ENCODE measurements at regions of chr2 and their contacts with region 1.

Region 1: GRCh38 chr2:100262555-100263320 is 59.6 kb downstream of the LONRF2 start:
- DNase-seq: peak; percentile 73
- ATAC-seq: peak; percentile 70
- H3K4me3 Mint-ChIP-seq: no peak overlapping the region
- H3K27ac Mint-ChIP-seq: no peak overlapping the region
- H3K4me1 Mint-ChIP-seq: no peaks in the 10 kb centered on the region
- H3K27me3 Mint-ChIP-seq: no peaks in the 10 kb centered on the region
- CTCF ChIP-seq: peak; percentile 97

Region 2: DNA sequence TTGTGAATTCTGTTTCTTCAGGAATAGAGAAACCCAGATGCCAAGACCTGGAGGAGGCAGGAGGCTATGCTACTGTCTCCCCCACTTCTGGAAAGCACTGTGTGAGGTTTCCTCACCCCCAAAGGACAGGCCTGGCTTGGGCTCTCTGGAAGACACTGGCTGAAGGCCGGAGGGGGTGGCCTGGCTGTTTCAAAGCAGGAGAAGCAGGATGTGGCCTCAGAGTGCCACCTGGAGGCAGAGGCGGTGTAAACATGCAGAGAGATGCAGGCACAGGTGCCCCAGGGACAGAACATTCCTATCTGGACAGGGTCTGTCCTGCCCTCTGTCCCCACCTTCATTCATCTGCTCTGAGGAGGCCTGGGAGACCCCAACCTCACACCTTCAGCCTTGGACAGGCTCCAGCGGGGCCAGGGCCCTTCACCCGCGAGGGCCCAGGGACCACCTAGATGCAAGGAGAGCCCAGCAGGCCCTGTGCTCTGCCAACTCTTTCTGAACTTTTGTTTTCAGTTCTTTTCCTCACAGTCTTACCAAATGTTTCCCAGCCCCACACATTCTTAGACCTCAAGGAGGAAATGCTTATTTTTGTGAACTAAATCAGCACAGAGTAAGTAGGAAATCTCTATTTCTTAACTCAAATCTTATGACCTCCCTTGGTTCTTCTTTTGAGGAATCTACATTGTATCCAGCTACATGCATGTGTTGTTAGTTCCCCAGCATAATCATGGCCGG is 19.7 kb before region 1 on chr2:
- CTCF ChIA-PET with region 1: interaction called, 17 read pairs
- POLR2A ChIA-PET with region 1: no interaction called
- intact Hi-C with region 1: no loop called
- DNase-seq: peak; percentile 72
- ATAC-seq: peak; percentile 70
- H3K4me3 Mint-ChIP-seq: no peak overlapping the region
- H3K27ac Mint-ChIP-seq: no peak overlapping the region
- H3K4me1 Mint-ChIP-seq: no peaks in the 10 kb centered on the region
- H3K27me3 Mint-ChIP-seq: peaks cover 5% of the 10 kb centered on the region
- CTCF ChIP-seq: peak; percentile 69

Region 3: DNA sequence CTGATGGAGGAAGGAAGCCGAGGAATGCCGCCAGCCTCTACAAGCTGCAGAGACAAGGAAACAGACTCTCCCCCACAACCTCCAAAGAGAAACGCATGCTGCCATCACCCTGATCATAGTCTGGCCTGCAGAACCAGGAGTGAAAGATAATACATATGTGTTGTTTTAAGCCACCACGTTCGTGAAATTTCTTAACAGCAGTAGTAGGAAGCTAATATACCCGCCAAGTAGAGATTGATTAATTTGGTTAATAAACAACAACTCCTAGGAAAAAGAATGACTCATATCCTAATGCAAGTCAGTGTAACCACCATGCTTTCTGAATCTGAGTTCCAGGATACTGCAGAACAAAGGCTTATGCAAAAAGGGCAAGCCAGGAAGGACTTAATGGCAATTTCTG is 23.0 kb after region 1 on chr2:
- CTCF ChIA-PET with region 1: interaction called, 20 read pairs
- POLR2A ChIA-PET with region 1: no interaction called
- intact Hi-C with region 1: no loop called
- DNase-seq: no peak
- ATAC-seq: no peak
- H3K4me3 Mint-ChIP-seq: no peak overlapping the region
- H3K27ac Mint-ChIP-seq: no peak overlapping the region
- H3K4me1 Mint-ChIP-seq: peaks cover 15% of the 10 kb centered on the region
- H3K27me3 Mint-ChIP-seq: peaks cover 11% of the 10 kb centered on the region
- CTCF ChIP-seq: no peak

Region 4: GRCh38 chr2:100381240-100381639 is 118.5 kb after region 1 on chr2:
- CTCF ChIA-PET with region 1: interaction called, 133 read pairs
- POLR2A ChIA-PET with region 1: interaction called, 4 read pairs
- intact Hi-C with region 1: loop called (anchors 1 kb)
- DNase-seq: peak; percentile 88
- ATAC-seq: peak; percentile 64
- H3K4me3 Mint-ChIP-seq: no peak overlapping the region
- H3K27ac Mint-ChIP-seq: no peak overlapping the region
- H3K4me1 Mint-ChIP-seq: peaks cover 2% of the 10 kb centered on the region
- H3K27me3 Mint-ChIP-seq: no peaks in the 10 kb centered on the region
- CTCF ChIP-seq: peak; percentile 91